Spleen (tissue), 13 donors: ENCODE measurements at regions of chr11 and their contacts with region 1.

Region 1: DNA sequence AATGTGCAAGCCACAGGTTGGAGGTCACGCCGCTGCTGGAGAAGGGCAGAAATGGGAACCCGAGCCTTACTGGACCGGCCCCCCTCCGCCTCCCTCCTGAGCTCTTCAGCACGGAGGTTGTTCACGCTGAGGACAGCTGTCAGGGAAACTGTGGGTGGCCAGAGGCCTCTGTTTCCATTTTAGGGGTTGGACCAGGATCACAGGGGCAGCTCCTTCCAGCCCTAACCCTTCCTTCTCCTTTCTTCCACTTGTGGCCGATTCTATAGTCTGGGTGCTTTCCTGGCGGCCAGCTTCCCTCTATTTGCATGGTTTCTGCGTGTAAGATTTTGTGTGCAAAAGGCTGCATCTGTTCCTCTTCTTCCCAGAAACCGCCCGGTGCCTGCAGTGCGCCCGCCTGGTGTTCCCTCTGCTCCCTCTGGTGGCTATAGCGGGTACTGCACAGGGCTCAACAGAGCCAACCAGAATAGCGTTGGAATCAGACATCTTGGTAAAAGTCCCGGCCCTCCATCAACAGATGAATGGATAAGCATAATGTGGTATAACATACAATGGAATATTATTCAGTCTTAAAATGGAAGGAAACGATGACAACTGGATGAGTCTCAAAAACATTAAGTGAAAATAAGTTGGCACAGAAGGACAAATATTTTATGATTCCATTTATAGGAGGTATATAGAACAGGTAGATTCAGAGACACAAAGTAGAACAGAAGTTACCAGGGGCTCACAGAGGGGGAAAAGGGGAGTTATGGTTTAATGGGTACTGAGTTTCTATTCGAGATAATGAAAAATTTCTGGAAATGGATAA is 8.4 kb upstream of the SLC22A8 start:
- DNase-seq: peak; percentile 93
- H3K4me3 ChIP-seq: no peak overlapping the region
- H3K27ac ChIP-seq: no peak overlapping the region
- H3K4me1 ChIP-seq: peaks cover 0 to 9% (median 5%) of the 10 kb centered on the region in 6 donors
- H3K27me3 ChIP-seq: peaks cover 0 to 36% (median 0%) of the 10 kb centered on the region in 7 donors
- CTCF ChIP-seq: peak; percentile 96 to 100 (median 98)
- POLR2A ChIP-seq: no peak

Region 2: GRCh38 chr11:62905927-62906531 is 118.0 kb before region 1 on chr11:
- intact Hi-C with region 1: loop called (anchors 2 kb)
- DNase-seq: peak; percentile 90
- H3K4me3 ChIP-seq: no peak overlapping the region
- H3K27ac ChIP-seq: no peak overlapping the region
- H3K4me1 ChIP-seq: peaks cover 0 to 26% (median 13%) of the 10 kb centered on the region in 6 donors
- H3K27me3 ChIP-seq: peaks cover 0 to 27% (median 4%) of the 10 kb centered on the region in 7 donors
- CTCF ChIP-seq: peak; percentile 86 to 98 (median 96)
- POLR2A ChIP-seq: no peak